ENCODE measurements at regions of chr4 and their contacts with region 1.

Region 1: DNA sequence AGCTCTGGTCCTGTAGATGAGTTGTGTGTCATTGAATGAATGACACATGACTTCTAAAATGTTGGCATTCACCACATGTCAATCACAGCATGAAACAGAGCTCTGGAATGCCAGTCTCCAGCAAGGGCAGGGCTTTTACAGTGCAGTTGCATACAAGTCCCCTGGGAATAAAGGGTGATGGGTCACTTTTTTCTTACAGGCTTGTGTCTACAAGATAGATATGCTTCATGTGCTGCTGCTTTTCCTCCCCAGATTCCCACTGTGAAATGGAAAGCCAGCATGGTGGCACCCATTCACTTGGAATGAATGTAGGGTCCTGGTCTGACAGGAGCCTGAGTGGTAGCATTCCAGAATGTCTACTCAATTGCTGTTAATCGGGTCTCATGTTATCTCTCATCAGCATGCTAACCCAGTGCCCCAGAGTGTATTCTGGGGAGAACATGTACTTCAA is 159.1 kb upstream of the KIT start:
- DNase-seq: peak; percentile 1
- H3K4me3 Mint-ChIP-seq: no peak overlapping the region
- H3K27ac Mint-ChIP-seq: no peak overlapping the region
- H3K4me1 Mint-ChIP-seq: no peaks in the 10 kb centered on the region
- H3K27me3 Mint-ChIP-seq: no peaks in the 10 kb centered on the region
- CTCF ChIP-seq: no peak

Region 2: GRCh38 chr4:54571293-54572151 is 72.8 kb after region 1 on chr4:
- CTCF ChIA-PET with region 1: no interaction called
- intact Hi-C with region 1: loop called (anchors 2 kb)
- DNase-seq: no peak
- H3K4me3 Mint-ChIP-seq: no peak overlapping the region
- H3K27ac Mint-ChIP-seq: no peak overlapping the region
- H3K4me1 Mint-ChIP-seq: peaks cover 5% of the 10 kb centered on the region
- H3K27me3 Mint-ChIP-seq: peaks cover 29% of the 10 kb centered on the region
- CTCF ChIP-seq: no peak

Measured in Calu3 (cell line).